Posterior cingulate gyrus (tissue), 11 donors: ENCODE measurements at regions of chr17 and their contacts with region 1.

Region 1: GRCh38 chr17:60594734-60595133 is 5.3 kb upstream of the PPM1D start:
- DNase-seq: no peak

Region 2: DNA sequence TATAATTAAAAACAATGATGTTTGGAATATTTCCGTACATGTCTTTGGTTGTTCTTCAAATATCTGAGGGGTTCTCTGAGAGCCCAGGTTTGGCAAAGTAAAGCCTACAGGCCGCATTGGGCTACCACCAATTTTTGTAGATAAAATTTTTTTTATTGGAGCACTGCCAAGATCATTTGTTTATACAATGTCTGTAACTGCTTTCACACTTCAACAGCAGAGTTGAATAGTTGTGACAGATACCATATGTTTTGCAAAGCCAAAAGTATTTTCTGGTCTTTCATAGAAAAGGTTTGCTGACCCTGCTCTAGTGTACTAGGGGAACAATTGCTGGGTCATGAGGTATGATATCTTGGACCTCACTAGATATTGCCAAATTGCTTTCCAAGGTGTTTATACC is 15.7 kb after region 1 on chr17:
- intact Hi-C with region 1: no loop called
- DNase-seq: no peak

Region 3: GRCh38 chr17:60630352-60630751 is 35.6 kb after region 1 on chr17:
- intact Hi-C with region 1: loop called (anchors 5 kb)
- DNase-seq: peak in 7 of 10 donors; percentile 19 to 88 (median 59)